A549 (cell line): ENCODE measurements at regions of chr5 and their contacts with region 1.

Region 1: DNA sequence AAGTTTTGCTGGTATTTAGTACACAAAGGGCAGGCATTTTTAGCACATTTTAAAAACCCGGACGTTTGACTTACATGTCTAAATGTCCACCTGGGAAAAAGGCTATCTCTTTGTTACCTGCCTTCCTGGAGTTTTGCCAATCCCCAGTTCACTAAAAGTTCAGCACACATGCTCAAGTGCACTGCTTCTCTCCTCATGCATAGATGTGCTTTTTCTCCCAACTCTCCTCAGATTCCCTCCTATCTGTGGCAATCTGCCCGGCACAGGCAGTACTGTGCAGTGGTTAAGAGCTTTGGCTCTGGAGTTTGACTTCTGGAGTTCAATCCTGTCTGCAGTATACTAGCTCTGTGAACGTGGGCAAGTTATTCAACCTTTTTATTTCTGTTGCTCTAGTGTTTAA is 8.3 kb upstream of the CCNO start:
- DNase-seq: no peak
- ATAC-seq: no peak
- H3K4me3 ChIP-seq: no peak overlapping the region
- H3K27ac ChIP-seq: no peak overlapping the region
- H3K4me1 ChIP-seq: peaks cover 4% of the 10 kb centered on the region; the same call in 1 of the 3 replicates
- CTCF ChIP-seq: no peak
- EP300 ChIP-seq: no peak
- POLR2A ChIP-seq: no peak
- RAD21 ChIP-seq: no peak

Region 2: GRCh38 chr5:54985301-54986268 is 256.2 kb before region 1 on chr5 and contains the start of gene ESM1:
- CTCF ChIA-PET with region 1: no interaction called
- POLR2A ChIA-PET with region 1: no interaction called
- DNase-seq: no peak
- ATAC-seq: peak; percentile 60 to 65
- H3K4me3 ChIP-seq: 0 out of 3 replicates have a peak within 1 kb of the TSS, but pooled peaks have one; percentile 6
- H3K27ac ChIP-seq: no peak within 1 kb of the TSS
- H3K4me1 ChIP-seq: no peaks in the 10 kb centered on the region
- CTCF ChIP-seq: no peak
- EP300 ChIP-seq: no peak
- POLR2A ChIP-seq: no peak
- RAD21 ChIP-seq: no peak
- polyA plus RNA-seq, gene ESM1: not detected in 2 replicates

Region 3: DNA sequence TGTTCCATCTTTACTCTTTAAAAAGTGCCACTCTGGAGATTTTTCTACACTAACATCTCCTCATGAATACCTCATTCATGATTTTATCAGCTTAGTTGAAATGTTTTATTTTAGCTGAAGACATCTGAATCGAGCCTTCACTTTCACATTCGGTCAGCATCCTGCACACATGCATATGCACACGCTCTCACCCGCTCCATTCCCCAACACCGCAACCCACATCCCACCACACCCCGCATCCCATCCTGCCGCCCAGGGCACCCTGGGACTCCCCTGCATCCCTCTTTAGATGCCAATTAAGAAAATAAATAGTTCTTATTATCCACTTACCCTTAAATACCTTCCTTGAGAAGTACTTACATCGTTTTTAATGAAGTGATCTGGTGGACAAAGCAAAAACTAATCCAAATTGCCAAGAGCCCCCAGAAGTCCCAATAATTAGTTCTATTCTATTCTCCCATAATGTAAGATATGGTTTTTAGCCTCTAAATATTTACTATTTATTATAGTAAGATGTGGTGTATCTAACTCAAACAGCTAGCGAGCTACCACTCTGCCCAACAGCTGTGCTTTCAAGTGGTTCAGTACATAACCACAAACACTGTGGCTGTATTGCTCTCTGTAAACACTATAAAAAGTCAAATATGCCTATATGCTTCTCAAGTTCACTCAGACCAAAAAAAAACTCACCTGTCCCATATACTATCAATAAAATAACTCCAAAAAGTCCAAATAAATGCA is 179.5 kb before region 1 on chr5:
- CTCF ChIA-PET with region 1: no interaction called
- POLR2A ChIA-PET with region 1: no interaction called
- DNase-seq: no peak
- ATAC-seq: no peak
- H3K4me3 ChIP-seq: no peak overlapping the region
- H3K27ac ChIP-seq: no peak overlapping the region
- H3K4me1 ChIP-seq: no peaks in the 10 kb centered on the region
- CTCF ChIP-seq: no peak
- EP300 ChIP-seq: no peak
- POLR2A ChIP-seq: no peak
- RAD21 ChIP-seq: no peak

Region 4: GRCh38 chr5:55258339-55258738 is 16.6 kb after region 1 on chr5:
- CTCF ChIA-PET with region 1: interaction called, 13 read pairs
- POLR2A ChIA-PET with region 1: no interaction called
- DNase-seq: no peak
- ATAC-seq: no peak
- H3K4me3 ChIP-seq: no peak overlapping the region
- H3K27ac ChIP-seq: no peak overlapping the region
- H3K4me1 ChIP-seq: no peaks in the 10 kb centered on the region
- CTCF ChIP-seq: no peak
- EP300 ChIP-seq: no peak
- POLR2A ChIP-seq: no peak
- RAD21 ChIP-seq: no peak